ENCODE measurements at regions of chr9 and their contacts with region 1.

Region 1: GRCh38 chr9:86637515-86637914 is 283.3 kb upstream of the TUT7 start:
- DNase-seq: peak; percentile 29
- H3K4me3 ChIP-seq: no peak overlapping the region
- CTCF ChIP-seq: peak; percentile 88

Region 2: DNA sequence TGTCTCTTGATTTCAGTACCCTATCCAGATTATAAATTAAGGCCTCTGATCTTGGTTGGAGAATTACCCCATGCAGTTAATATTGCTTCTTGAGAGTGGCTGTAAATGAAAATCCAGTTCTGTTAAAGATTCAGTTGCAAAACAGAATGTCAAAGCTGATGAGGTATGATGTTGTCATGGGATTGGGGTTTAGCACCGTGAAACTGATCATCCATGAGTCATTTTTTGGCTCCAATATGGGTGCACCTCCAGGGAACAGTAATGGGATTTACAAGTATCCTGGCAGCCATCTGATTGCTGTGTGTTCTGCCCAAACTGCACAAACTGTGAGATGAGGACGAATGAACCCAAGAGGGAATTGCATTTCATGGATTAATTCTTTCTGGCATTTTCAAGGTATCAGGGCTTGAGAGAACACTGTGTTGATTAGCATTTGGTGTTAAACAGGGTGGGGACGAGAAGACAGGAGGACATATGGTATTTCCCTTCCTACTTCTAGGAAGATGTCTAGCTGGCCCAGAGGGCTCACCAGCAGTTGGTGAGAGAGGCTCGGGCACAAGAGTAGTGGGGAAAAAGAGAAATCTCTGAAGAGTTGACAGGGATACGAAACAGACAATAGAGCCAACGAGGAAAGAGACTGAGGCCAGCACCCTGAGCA is 95.1 kb after region 1 on chr9:
- in situ Hi-C with region 1: loop called (anchors 5 kb)
- DNase-seq: peak; percentile 95
- H3K4me3 ChIP-seq: no peak overlapping the region
- CTCF ChIP-seq: no peak

Region 3: GRCh38 chr9:86948074-86948929 is 310.8 kb after region 1 on chr9:
- in situ Hi-C with region 1: loop called (anchors 25 kb)
- DNase-seq: peak; percentile 66
- H3K4me3 ChIP-seq: peak overlapping the region; percentile 63
- CTCF ChIP-seq: peak; percentile 96

Region 4: DNA sequence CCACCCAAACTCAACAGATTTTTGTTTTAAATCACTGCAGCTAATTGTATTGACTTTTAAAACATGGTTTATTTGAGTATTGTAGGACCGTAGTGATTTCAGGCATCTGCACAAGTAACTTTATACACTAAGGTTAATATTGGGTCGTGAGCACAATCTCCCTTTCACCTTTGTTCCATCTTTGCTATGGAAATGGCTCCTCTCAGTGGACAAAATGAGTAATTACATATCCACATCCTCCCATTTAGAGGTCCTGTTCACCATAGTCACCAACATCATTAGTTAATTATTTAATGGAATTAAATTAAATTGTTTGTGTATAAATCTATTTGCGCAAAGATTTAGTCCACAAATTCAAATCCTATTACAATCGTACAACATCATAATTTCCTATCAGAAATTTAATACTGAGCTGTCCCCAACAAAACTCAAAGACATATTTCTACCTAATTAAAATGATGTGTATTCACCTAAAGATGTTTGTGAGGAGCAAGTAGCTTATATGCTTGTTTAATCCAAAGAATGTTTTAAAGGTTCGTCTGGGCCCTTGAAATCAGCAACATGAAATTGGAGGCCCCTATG is 687.2 kb after region 1 on chr9:
- in situ Hi-C with region 1: loop called (anchors 5 kb)
- DNase-seq: peak; percentile 58
- H3K4me3 ChIP-seq: no peak overlapping the region
- CTCF ChIP-seq: peak; percentile 44